ENCODE measurements at regions of chr15 and their contacts with region 1.

Region 1: GRCh38 chr15:68252925-68253534 is 23.5 kb upstream of the CLN6 start:
- DNase-seq: no peak
- H3K4me3 Mint-ChIP-seq: no peak overlapping the region
- H3K27ac Mint-ChIP-seq: no peak overlapping the region
- H3K4me1 Mint-ChIP-seq: no peaks in the 10 kb centered on the region
- H3K27me3 Mint-ChIP-seq: peaks cover 19% of the 10 kb centered on the region

Region 2: GRCh38 chr15:68229386-68230156 is 23.5 kb before region 1 on chr15 and contains the start of gene CLN6:
- intact Hi-C with region 1: loop called (anchors 2 kb)
- DNase-seq: peak; percentile 73
- H3K4me3 Mint-ChIP-seq: peak within 1 kb of the TSS; percentile 94
- H3K27ac Mint-ChIP-seq: peak within 1 kb of the TSS; percentile 96
- H3K4me1 Mint-ChIP-seq: peaks cover 40% of the 10 kb centered on the region
- H3K27me3 Mint-ChIP-seq: no peaks in the 10 kb centered on the region
- total RNA-seq, gene CLN6: 95.3 and 98.3 TPM in 2 replicates

Region 3: DNA sequence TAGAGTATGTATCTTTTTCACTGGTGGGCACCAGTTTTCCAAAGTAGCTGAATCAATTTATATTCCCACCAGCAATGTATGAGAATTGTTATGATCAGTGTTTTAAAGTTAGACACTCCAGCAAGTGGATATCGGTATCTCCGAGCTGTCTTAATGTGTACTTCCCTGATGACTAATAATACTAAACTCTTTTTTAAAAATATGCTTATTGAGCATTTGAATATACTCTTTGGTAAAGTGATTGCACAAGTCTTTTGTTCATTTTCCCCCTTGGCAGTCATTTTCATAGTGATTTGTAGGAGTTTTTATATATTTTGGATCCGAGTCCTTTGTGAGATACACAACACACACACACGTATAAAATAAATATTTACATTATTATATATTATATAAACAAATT is 12.1 kb after region 1 on chr15:
- intact Hi-C with region 1: no loop called
- DNase-seq: no peak
- H3K4me3 Mint-ChIP-seq: no peak overlapping the region
- H3K27ac Mint-ChIP-seq: no peak overlapping the region
- H3K4me1 Mint-ChIP-seq: no peaks in the 10 kb centered on the region
- H3K27me3 Mint-ChIP-seq: peaks cover 48% of the 10 kb centered on the region

Region 4: DNA sequence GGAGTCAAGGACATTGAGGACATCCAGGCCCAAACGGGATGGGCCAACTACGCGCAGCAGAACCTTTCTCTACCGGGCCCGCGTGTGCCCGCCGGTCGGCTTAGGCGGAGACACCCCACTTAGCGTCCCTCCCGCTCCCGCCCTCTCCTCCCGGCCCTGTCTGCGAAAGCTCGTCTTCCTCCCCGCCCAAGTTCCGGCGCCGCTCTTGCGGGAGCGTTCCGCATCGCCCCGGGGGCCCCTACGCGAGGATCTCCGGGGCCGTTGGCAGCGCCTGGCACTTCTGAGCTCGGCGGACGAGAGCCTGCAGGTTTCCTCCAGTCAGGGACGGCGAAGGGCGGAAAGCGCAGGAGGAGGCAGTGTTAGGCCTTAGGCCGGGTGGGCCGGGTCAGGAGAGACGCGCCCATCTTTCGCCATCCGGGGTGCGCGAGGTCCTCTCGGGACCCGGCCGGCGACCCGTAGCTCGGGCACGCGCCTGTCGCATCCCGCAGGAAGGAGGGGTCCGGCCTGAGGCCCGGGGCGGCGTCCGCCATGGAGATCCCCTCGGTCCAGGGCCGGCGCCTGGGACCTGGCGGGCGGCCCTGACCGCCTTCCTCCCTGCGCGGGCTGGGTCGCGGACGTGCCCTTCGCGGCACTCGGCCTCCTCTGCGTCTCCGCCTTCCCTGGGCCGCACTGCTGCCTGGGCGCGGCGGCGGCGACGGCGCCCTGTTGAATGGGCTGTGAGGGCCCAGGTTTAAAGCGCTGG is 24.7 kb after region 1 on chr15 and contains the start of gene FEM1B:
- intact Hi-C with region 1: loop called (anchors 1 kb)
- DNase-seq: peak; percentile 85
- H3K4me3 Mint-ChIP-seq: peak within 1 kb of the TSS; percentile 100
- H3K27ac Mint-ChIP-seq: peak within 1 kb of the TSS; percentile 97
- H3K4me1 Mint-ChIP-seq: peaks cover 68% of the 10 kb centered on the region
- H3K27me3 Mint-ChIP-seq: no peaks in the 10 kb centered on the region
- total RNA-seq, gene FEM1B: 42.8 and 49.4 TPM in 2 replicates

Region 5: GRCh38 chr15:68304589-68305337 is 51.7 kb after region 1 on chr15:
- intact Hi-C with region 1: loop called (anchors 1 kb)
- DNase-seq: no peak
- H3K4me3 Mint-ChIP-seq: no peak overlapping the region
- H3K27ac Mint-ChIP-seq: peak overlapping the region; percentile 11
- H3K4me1 Mint-ChIP-seq: peaks cover 26% of the 10 kb centered on the region
- H3K27me3 Mint-ChIP-seq: peaks cover 7% of the 10 kb centered on the region

Region 6: GRCh38 chr15:68383161-68384074 is 130.4 kb after region 1 on chr15:
- intact Hi-C with region 1: loop called (anchors 1 kb)
- DNase-seq: peak; percentile 25
- H3K4me3 Mint-ChIP-seq: no peak overlapping the region
- H3K27ac Mint-ChIP-seq: no peak overlapping the region
- H3K4me1 Mint-ChIP-seq: peaks cover 18% of the 10 kb centered on the region
- H3K27me3 Mint-ChIP-seq: peaks cover 3% of the 10 kb centered on the region

Region 7: DNA sequence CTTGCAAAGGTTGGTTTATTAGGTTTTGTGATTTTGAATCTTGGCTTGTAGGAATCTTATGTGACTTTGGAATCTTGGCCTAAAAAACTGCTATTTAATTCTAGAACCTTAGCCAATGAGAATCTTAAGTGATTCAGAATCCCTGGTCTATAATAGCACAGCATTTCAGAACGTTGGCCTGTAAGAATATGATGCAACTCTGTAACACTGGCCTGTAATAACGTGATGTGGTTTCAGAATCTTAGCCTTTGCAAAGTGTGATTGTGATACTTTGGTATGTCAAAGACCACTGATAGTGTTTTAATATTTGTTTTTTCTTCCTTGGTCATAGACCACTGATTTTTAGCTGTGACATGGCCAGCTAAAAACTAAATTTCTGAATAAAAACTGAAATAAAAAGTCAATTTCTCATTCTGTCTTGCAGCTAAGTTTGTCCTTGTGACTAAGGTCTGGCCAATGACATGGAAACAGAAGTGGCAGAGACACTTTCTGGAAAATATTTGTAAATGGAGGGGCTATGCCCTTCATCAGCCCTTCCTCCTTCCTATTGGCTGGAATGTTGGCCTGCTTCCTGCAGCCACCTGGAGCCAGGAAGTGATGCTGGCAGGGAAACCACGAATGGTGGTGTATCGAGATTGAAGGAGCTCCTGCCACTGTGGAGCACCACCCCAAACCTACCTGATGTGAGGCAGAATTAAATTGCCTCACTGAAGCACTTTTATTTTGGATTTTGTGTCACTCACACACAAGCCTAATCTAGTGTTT is 283.5 kb after region 1 on chr15:
- intact Hi-C with region 1: loop called (anchors 2 kb)
- DNase-seq: no peak
- H3K4me3 Mint-ChIP-seq: no peak overlapping the region
- H3K27ac Mint-ChIP-seq: no peak overlapping the region
- H3K4me1 Mint-ChIP-seq: no peaks in the 10 kb centered on the region
- H3K27me3 Mint-ChIP-seq: peaks cover 21% of the 10 kb centered on the region

Region 8: DNA sequence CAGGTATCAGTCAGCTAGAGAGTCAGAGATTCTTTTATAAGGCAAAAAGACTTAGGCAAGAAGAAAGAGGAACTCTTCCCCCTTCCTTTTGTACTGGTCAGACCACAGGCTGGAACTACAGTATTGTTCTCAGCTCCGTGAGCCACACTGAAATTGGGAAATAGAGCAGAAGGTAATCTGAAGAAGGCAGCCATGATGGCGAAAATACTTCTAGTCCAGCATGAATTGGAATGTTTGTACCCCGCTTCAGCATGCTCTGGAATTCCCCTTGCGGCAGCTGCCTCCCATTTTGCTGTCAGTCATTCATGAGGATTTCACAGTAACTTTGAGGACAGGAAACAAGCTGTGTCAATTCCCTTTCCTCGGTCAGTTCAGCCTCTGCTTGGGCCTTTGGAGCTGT is 421.9 kb after region 1 on chr15:
- intact Hi-C with region 1: loop called (anchors 1 kb)
- DNase-seq: no peak
- H3K4me3 Mint-ChIP-seq: no peak overlapping the region
- H3K27ac Mint-ChIP-seq: no peak overlapping the region
- H3K4me1 Mint-ChIP-seq: no peaks in the 10 kb centered on the region
- H3K27me3 Mint-ChIP-seq: peaks cover 9% of the 10 kb centered on the region